ENCODE measurements at regions of chr9 and their contacts with region 1.

Region 1: DNA sequence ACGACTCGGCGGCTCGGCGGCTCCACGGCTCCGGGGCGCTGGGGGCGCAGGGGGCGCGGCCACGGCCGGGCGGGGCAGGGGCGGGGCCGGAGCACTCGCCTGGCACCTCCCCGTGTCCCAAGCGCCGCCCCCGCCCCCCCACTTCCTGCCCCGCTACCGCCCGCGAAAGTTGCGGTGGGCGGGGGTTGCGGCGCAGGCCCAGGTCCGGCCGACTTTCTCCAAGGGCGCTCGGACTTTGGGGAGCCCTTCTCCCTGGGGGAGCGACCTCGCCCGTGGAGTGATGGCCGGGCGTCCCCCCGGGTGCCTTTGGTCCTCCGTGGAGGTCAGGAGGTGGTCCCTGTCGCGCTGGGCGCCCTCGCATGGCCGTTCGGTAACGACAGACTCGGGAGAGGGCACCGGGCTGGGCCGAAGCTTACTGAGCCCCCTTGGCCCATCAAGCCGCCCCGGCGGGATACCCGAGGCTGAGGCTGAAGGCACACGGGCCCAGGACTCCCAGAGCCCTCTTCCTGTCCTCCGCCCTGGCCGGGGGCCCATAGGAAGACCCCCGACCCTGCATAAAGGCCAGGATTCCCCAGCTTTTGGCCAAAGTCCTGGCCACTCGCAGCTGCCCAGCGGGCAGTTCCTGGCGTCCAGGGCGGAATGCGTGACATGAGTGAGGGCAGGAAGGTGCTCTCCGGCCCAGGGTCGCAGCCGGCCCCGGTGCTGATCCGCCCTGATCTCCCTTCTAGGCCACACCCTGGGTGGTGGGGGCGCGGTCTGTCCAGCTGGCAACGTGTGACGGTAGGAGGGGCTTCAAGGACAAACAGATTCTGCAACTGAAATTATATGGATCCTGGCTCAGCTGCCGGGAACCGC is 883 bp upstream of the VAV2 start:
- DNase-seq: peak; percentile 88
- ATAC-seq: peak; percentile 75
- H3K4me3 Mint-ChIP-seq: peak overlapping the region; percentile 61
- H3K27ac Mint-ChIP-seq: no peak overlapping the region
- H3K4me1 Mint-ChIP-seq: peaks cover 2% of the 10 kb centered on the region
- H3K27me3 Mint-ChIP-seq: peaks cover 3% of the 10 kb centered on the region

Region 2: DNA sequence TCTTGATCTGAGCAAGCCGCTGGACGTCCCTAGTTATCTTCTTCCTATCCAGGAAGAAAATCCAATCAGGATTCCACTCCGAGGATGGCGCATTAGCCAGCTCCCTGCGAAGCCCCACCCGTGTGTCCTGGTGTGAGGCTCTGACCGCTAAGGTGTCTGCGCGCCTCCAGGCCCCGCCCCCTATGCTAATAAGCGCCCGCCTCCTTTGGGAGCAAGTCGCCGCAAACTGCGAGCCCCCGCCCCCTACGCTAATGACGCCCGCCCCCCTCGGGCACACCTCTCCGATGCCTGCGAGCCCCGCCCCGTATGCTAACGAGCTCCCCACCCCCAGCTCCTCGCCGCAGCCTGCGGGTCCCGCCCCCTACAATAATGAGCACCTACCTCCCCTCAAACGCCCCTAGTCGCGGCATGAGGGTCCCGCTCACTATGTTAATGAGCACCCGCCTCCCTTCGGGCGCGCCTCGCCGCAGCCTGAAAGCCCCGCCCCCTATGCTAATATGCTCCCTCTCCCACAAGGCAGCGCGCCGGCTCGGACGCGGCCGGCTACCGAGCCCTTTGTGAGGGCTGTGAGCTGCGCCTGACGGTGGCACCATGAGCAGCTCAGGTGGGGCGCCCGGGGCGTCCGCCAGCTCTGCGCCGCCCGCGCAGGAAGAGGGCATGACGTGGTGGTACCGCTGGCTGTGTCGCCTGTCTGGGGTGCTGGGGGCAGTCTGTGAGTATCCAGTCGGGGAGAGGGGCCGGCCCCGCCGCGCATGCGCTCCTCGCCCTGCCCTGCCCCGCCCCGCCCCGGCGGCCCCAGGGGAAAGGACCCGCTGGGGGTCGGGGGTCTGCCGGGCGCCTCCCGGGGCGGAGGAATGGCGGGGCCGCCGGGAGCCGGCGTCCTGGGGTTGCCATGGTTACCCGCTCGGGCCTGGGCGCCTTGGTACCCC is 533.3 kb before region 1 on chr9 and contains the start of gene CACFD1:
- CTCF ChIA-PET with region 1: no interaction called
- POLR2A ChIA-PET with region 1: no interaction called
- intact Hi-C with region 1: loop called in 1 of 2 experiments (anchors 1 kb)
- DNase-seq: peak; percentile 96
- ATAC-seq: peak; percentile 88
- H3K4me3 Mint-ChIP-seq: peak within 1 kb of the TSS; percentile 74
- H3K27ac Mint-ChIP-seq: peak within 1 kb of the TSS; percentile 42
- H3K4me1 Mint-ChIP-seq: no peaks in the 10 kb centered on the region
- H3K27me3 Mint-ChIP-seq: no peaks in the 10 kb centered on the region
- total RNA-seq, gene CACFD1: 0.87 to 0.90 TPM

Region 3: DNA sequence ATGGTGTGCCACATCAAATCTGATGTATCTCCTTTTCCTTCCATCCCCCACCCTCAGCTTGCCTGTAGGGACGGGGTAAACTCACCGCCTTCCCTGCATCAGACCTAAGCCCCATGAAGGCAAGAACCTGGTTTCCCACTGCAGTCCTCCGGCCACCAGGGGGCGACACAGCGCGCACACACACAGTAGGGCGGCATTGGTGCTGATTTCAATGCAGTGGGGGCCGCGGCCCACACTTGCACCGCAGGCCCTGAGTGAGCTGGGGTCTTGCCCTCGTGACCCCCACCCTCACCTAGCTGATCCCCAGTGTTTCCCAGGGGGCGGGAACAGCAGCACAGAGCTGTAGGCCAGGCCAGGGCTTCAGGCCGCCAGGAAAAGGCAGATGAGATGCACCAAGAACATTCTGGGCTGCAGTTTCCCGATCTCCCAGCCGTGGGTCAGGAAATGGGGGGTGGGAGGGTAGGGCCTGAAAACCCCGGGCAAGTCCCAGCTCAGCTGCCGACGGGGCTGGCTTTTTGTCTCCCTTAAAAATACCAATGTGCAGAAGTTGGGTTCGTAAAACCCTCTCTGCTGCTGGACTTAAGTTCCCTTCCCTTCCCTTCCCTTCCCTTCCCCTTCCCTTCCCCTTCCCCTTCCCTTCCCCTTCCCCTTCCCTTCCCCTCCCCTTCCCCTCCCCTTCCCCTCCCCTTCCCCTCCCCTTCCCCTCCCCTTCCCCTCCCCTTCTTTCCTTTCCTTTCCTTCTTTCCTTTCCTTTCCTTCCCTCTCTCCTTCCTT is 403.4 kb before region 1 on chr9:
- CTCF ChIA-PET with region 1: no interaction called
- POLR2A ChIA-PET with region 1: no interaction called
- intact Hi-C with region 1: loop called in 1 of 2 experiments (anchors 10 kb)
- DNase-seq: peak; percentile 79
- ATAC-seq: peak; percentile 72
- H3K4me3 Mint-ChIP-seq: no peak overlapping the region
- H3K27ac Mint-ChIP-seq: no peak overlapping the region
- H3K4me1 Mint-ChIP-seq: peaks cover 3% of the 10 kb centered on the region
- H3K27me3 Mint-ChIP-seq: peaks cover 8% of the 10 kb centered on the region

Region 4: DNA sequence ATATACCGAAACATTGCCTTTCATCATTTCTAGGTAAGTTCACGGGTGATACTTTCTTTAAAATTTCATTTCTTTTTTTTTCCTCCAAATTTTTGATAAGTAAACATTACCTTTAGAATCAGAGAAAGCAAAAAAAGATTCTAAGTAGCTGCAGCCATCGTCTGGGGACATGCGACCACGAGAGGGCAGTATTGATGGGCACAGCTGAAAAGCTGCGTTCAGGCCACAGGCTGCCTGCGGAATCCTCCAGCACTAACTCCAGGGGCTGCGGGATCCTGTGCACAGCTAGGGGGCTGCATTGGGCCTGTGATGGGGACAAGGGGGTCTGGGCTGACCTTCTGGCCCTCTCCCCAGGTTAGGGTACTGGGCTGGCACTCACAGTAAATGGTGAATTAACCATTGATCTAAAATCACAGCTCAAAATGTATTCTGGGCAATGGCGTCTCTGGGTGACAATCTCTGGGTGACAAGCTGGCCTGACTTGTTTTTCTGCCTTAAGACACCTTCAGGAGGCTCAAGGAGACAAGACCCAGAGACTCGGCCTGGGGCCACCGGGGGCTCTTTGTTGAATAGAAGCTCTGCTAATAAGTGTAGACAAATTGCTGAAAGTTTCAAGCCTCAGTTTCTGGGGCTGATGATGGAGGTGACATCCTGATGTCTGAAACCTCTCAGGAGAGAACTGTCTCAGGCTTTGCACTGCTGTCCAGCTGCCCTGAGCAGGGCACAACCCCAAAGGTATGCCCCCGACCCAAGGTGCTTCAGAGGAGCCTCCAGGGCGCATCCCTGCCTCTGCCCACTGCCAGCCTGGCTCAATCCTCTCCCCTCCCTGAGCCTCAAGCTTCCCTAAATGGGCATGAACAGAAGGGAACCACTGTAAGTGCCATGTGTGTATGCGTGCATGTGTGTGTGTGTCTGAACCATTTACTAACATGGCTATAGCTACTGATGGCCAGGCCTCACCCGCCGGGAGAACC is 210.6 kb before region 1 on chr9:
- CTCF ChIA-PET with region 1: interaction called, 54 read pairs
- POLR2A ChIA-PET with region 1: no interaction called
- intact Hi-C with region 1: loop called (anchors 1 kb)
- DNase-seq: peak; percentile 85
- ATAC-seq: peak; percentile 63
- H3K4me3 Mint-ChIP-seq: no peak overlapping the region
- H3K27ac Mint-ChIP-seq: no peak overlapping the region
- H3K4me1 Mint-ChIP-seq: no peaks in the 10 kb centered on the region
- H3K27me3 Mint-ChIP-seq: no peaks in the 10 kb centered on the region

Region 5: DNA sequence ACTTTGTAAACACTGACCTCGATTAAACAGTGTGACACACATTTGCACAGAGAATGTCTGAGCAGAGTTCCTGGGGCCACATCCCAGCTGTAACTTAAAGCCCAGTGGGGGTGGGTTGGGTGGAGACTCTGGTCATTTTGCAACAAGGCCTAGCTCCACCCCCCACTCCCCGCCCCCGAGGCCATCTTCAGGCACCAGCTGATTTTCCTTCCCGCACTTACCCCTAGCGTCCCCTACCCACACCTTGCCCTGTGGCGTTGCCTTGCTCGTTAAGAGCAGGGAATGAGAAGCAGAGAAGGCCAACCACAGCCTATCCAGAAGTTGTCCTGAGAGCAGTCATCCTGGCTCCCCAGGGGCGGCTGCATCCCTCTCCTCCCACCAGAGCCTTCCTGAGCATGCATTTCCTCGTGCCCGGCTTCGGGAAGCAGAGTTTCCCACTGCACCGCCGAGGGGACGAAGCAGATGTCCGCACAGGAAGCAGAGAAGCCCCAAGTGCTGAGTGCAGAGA is 153.1 kb before region 1 on chr9:
- CTCF ChIA-PET with region 1: no interaction called
- POLR2A ChIA-PET with region 1: no interaction called
- intact Hi-C with region 1: no loop called
- DNase-seq: no peak
- ATAC-seq: no peak
- H3K4me3 Mint-ChIP-seq: no peak overlapping the region
- H3K27ac Mint-ChIP-seq: no peak overlapping the region
- H3K4me1 Mint-ChIP-seq: no peaks in the 10 kb centered on the region
- H3K27me3 Mint-ChIP-seq: no peaks in the 10 kb centered on the region

Region 6: DNA sequence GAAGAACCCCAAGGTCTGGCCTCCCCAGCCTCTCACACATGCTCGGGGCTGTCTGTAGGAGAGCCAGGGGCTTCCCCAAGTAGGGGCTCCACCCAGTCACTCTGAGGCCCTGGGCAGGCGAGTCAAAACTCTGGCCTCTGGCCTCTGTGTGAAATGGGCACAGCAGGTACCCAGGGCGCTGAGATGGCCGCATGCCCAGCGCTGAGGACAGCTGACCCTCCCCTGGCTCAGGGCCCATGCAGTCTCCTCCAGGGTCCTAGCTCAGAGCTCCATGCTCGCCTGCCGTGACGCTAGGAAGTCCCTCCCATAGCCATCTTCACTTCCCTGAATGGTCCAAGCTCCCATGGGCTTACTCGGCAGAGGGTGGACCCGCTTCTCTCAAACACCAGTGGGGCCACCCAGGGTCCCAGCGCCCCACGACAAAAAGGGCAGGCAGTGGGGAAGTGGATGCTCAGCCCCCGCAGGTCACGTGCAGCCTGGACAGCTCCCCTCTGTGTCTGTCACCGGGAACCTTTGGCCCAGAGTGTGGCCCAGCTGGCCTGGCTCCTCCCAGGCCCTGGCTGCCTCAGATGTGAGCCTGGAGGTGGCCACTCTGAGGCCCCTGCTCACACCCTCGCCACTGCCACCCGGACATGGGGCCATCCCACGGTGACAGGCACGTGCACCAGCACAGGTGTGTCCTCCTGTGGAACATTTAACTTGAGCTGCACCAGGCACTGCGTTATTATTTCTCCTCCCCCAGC is 11.3 kb after region 1 on chr9:
- CTCF ChIA-PET with region 1: interaction called, 12 read pairs
- POLR2A ChIA-PET with region 1: no interaction called
- intact Hi-C with region 1: no loop called
- DNase-seq: no peak
- ATAC-seq: no peak
- H3K4me3 Mint-ChIP-seq: no peak overlapping the region
- H3K27ac Mint-ChIP-seq: no peak overlapping the region
- H3K4me1 Mint-ChIP-seq: no peaks in the 10 kb centered on the region
- H3K27me3 Mint-ChIP-seq: peaks cover 2% of the 10 kb centered on the region

Region 7: DNA sequence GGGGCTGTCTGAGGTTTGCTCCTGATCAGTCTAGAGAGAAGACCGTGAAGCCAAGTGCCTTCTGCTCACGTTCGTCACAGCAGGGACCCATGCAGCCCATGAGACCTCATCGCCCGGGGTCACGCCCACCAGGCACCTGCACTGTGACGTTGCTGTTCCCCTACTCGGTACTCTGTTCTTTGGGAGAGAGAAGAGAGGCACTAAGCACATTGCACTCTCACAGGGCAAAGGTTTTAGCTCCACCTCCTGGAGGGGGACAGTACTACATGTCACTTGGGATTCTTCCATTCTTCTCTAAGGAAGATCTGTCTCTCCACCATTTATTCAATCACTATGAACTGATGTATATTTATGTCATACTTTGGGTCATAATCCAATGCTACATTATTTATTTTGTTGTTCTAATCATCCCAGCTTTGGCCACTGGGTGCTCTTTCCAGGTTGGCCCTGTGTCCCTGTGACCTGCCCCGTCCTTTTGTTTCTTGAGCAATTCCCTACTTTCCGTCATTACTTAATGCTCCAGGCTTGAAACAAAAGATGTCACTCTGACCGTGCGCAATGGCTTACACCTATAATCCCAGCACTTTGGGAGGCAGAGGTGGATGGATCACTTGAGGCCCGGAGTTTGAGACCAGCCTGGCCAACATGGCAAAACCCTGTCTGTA is 106.2 kb after region 1 on chr9:
- CTCF ChIA-PET with region 1: no interaction called
- POLR2A ChIA-PET with region 1: no interaction called
- intact Hi-C with region 1: loop called in 1 of 2 experiments (anchors 1 kb)
- DNase-seq: peak; percentile 75
- ATAC-seq: peak; percentile 86
- H3K4me3 Mint-ChIP-seq: no peak overlapping the region
- H3K27ac Mint-ChIP-seq: no peak overlapping the region
- H3K4me1 Mint-ChIP-seq: no peaks in the 10 kb centered on the region
- H3K27me3 Mint-ChIP-seq: peaks cover 17% of the 10 kb centered on the region

Region 8: DNA sequence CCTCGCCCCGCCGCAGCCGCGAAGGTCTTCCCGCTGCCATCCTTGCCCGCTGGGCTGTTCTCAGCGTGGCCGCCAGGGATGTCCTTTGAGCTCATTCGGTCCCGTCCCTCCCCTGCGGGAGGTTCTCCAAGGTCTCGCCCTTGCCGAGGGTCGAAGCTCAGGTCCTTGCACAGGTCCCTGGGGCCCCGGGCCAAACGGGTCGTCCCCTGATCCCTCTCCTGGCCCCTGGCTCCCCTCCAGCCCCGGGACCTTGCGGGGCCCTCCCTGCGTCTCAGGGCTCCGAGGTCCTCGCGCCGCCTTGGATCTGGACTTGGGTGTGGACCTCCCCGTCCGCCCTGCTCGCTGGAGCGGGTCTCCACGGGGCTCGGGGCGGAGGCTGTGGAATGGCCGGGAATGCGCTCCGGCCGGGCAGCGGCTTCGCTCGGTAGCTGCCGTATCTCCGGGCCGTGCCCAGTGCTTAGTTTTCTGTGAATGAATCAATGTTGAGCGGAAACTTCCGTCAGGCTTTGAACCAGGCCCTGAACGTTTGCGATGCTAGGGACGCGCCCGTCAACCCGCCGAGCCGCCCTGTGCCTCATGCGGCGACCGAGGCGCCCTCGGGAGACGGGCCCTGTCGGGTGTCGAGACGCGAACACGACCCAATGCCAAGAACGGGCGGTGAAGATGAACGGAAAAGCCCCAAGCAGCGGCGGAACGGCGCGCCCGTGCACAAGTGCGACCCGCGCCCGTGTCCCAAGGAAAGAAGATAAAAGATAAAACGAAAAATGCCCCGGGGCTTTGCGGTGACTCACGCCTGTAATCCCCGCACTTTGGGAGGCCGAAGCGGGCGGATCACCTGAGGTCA is 170.6 kb after region 1 on chr9:
- CTCF ChIA-PET with region 1: no interaction called
- POLR2A ChIA-PET with region 1: no interaction called
- intact Hi-C with region 1: loop called in 1 of 2 experiments (anchors 1 kb)
- DNase-seq: peak; percentile 83
- ATAC-seq: peak; percentile 39
- H3K4me3 Mint-ChIP-seq: no peak overlapping the region
- H3K27ac Mint-ChIP-seq: no peak overlapping the region
- H3K4me1 Mint-ChIP-seq: peaks cover 2% of the 10 kb centered on the region
- H3K27me3 Mint-ChIP-seq: no peaks in the 10 kb centered on the region

Measured in activated CD4-positive, alpha-beta T cell treated with anti-CD3 and anti-CD28 coated beads for 36 hours (primary cell).